ENCODE measurements at regions of chr22 and their contacts with region 1.

Region 1: GRCh38 chr22:42919199-42919598 is 62.1 kb upstream of the ARFGAP3 start:
- DNase-seq: no peak
- H3K4me3 ChIP-seq: no peak overlapping the region
- H3K27ac ChIP-seq: no peak overlapping the region
- H3K4me1 ChIP-seq: peaks cover 3% of the 10 kb centered on the region
- H3K27me3 ChIP-seq: no peaks in the 10 kb centered on the region
- CTCF ChIP-seq: no peak
- POLR2A ChIP-seq: no peak

Region 2: DNA sequence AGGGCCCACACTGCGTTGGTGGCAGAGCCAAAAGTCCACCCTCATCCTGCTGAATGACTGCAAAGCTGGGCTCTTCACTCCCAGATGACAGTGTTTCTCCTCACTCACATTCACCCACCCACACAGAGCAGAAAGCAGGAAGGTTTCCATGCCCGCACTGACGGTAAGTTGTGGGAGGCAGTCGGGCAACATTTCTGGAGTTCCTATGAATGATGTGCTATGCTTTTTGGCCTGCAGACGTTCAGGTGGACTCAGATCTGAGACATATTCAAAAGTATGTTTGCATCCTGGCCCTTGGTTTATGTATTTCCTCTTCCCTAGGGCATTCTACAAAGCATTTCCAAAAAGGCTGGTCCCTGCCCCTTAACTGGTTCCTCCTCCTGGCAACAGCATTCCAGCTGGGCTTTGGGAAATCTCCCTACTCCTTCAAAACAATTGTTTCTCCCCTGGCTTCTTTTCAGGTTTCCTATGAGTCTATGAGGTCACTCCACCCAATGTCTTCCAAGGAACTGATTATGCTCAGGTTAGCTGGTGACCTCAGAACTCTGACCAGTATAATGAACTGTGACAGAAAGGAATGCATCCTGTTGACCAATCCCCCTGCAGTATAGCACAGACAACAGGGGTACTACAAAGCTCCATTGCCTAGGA is 59.4 kb after region 1 on chr22:
- intact Hi-C with region 1: loop called (anchors 10 kb)
- DNase-seq: no peak
- H3K4me3 ChIP-seq: no peak overlapping the region
- H3K27ac ChIP-seq: no peak overlapping the region
- H3K4me1 ChIP-seq: peaks cover 12% of the 10 kb centered on the region
- H3K27me3 ChIP-seq: no peaks in the 10 kb centered on the region
- CTCF ChIP-seq: no peak
- POLR2A ChIP-seq: no peak